GM10248 (cell line): ENCODE measurements at regions of chr6 and their contacts with region 1.

Region 1: GRCh38 chr6:27795697-27796494 is 116.3 kb downstream of the OR2B2 start:
- DNase-seq: peak; percentile 63
- CTCF ChIP-seq: peak; percentile 76

Region 2: DNA sequence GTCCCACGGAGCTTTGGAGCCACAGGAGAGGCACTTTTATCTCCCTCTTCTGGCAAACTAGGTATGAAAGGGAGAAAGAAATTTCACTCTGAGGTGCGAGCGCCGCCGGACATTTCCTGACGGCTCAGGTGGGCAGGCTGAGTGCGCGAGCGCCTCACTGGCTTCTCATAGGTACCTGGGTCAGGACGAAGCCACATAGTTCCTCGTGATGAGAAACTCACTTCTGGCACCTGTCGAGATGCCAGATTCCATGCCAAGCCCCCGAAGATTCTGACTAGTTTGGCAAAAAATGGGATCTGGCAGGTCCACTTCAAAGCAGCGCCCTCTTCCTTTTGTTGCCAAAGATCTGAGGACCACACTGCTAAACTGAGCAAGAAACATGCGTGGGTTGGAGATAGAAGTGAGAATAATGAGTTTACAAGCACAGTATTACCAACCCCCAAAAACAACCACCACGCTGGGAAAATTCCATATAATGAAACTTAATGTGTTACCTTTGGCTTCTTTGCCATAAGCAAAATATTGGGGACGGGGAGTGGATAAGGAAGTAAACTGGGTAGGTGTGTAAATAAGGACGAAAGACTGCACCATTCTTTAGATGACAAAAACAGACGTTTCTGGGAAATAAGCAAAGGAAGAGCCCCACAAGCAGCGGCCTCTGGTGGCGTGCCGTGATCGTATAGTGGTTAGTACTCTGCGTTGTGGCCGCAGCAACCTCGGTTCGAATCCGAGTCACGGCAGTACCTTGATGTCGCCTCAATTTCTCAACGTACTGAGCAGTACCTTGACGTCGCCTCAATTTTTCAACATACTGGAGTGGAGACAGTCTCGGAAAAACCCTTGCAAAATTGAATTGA is 638.2 kb before region 1 on chr6:
- CTCF ChIA-PET with region 1: interaction called, 39 read pairs
- POLR2A ChIA-PET with region 1: no interaction called
- DNase-seq: peak; percentile 58
- CTCF ChIP-seq: peak; percentile 55

Region 3: DNA sequence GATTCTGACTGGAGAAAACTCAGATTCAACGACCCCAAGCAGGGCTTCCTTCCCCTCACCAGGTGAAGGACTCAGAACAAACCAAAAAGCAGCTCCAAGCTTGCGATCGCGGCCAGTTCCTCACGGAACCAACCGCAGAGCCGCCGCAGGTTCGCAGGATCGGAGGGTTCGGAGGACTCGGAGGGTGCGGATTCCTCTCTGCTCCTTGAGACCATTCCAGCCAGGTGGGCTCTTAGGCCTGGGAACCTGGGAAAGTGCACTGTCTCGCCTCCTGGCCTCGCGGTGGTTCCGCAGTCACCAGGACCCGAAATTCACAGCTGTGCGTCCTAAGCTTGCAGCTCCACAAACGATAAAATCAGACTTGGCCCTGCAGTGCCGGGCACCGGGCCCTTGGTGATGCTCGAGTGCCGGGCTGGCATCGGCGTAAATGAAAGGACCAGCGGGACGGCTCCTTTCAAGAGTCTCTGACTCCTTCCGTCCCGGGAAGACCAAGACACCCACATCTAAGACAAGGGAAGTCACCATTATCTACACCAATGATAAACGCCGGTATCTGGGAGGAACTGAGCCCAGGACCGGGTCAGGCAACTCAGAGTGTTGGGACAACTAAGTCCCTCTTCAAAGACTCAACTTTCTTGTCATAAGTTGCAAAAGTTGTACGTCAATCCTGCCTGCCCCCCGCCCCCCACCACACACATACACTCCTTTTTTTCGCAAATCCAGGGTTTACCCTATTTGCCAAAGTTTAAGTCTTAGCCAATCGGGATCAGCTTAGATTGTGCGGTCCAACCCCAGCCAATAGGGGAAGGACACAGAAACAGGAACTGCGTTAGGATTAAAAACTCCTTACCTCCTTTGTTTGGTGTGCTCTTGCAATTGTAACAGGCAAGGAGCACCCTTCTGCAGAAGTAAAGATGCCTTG is 618.1 kb before region 1 on chr6:
- CTCF ChIA-PET with region 1: interaction called, 10 read pairs
- POLR2A ChIA-PET with region 1: no interaction called
- DNase-seq: peak; percentile 77
- CTCF ChIP-seq: peak; percentile 47

Region 4: DNA sequence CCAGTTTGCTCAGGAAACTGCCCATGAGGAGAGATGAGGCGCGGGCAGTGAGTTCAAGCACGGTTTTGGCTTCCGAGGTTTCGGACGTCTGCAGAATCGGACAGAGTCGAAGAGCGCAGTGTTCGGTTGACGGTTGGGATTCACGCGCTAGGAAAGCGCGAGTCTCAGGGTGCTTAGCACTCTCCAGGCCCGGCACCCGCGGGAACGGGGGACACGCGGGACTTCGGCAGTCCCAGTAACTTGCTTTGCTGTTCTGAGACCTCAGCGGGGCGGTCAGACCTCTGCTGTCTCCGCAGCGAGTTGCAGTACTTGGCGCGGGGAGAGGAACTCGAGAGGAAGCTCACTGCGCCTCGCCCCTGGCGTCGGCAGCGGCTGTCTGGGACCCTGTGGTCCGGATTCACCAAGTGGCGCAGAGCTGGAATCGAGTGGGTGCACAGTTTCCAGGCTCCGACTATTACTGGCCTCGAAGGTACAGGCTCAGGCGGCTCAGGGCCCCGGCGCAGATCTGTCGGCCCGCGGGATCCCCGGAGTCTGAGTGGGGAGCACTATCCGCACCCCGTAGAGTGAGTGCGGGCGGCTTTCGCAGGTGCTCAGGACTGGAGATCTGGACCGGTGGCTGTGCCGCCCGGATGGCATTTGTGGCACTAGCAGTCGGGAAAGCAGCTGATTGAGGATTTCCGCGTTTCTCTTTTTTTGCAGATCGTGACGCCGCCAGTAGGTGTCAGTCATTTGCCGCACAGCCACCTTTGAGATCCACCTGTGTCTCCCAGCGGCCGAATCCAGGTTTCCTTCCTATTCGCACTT is 483.5 kb before region 1 on chr6 and contains the start of gene POM121L2:
- CTCF ChIA-PET with region 1: interaction called, 17 read pairs
- POLR2A ChIA-PET with region 1: no interaction called
- DNase-seq: peak; percentile 76
- CTCF ChIP-seq: peak; percentile 79

Region 5: DNA sequence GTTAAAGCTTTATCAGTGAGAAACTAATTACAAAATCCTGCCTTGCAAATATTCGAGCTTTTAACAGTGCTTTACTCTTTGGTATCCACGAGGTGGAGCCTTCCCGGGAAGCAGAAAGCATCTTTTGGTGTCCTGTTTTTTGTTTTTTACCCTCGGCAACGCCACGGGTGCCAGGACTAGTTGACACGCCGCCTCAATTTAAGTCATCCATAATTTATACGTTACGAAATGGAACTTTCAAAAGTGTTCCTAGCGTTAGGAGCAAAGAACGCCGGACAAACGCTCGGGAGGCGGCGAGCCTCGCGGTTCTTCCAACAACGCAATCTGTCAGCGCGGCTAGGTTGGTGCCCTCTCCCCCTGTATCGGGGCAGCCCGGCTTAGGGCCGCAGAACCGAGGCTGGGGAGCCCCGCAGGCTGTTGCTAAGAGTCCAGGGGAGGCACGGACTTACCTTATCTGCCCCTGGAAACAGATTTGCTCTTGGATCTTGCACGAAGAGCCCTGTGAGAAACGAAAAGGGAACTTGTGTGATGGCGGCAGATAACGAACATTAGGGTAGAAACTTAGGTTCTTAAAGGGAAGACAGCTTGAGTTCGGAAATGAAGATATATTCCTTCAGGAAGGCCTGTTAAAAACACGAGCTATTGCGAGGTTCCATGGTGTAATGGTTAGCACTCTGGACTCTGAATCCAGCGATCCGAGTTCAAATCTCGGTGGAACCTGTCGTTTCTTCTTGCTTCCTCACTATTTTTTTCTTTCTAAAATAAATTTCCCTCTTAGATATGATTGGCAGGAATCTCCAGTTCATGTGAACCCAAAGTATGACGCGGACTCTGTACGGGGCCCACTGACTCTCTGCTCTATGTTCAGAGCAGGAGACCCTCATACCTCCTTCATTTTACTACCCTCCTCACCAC is 276.8 kb before region 1 on chr6:
- CTCF ChIA-PET with region 1: interaction called, 13 read pairs
- POLR2A ChIA-PET with region 1: no interaction called
- DNase-seq: peak; percentile 70
- CTCF ChIP-seq: peak; percentile 67